Aorta (tissue), 5 donors: ENCODE measurements at regions of chr3 and their contacts with region 1.

Region 1: GRCh38 chr3:186493525-186494255 is 50.5 kb downstream of the CRYGS start:
- DNase-seq: no peak
- ATAC-seq: peak; percentile 62
- H3K4me3 ChIP-seq: no peak overlapping the region
- H3K27ac ChIP-seq: peak overlapping the region in 1 of 2 donors; percentile 19
- H3K4me1 ChIP-seq: peaks cover 0 to 4% of the 10 kb centered on the region in 2 donors
- H3K27me3 ChIP-seq: no peaks in the 10 kb centered on the region

Region 2: GRCh38 chr3:186406669-186407635 is 86.7 kb before region 1 on chr3:
- intact Hi-C with region 1: loop called in 1 of 2 experiments (anchors 5 kb)
- DNase-seq: peak; percentile 76 to 83
- ATAC-seq: peak; percentile 85
- H3K4me3 ChIP-seq: no peak overlapping the region
- H3K27ac ChIP-seq: peak overlapping the region; percentile 83 to 97
- H3K4me1 ChIP-seq: peaks cover 0 to 6% of the 10 kb centered on the region in 2 donors
- H3K27me3 ChIP-seq: no peaks in the 10 kb centered on the region

Region 3: DNA sequence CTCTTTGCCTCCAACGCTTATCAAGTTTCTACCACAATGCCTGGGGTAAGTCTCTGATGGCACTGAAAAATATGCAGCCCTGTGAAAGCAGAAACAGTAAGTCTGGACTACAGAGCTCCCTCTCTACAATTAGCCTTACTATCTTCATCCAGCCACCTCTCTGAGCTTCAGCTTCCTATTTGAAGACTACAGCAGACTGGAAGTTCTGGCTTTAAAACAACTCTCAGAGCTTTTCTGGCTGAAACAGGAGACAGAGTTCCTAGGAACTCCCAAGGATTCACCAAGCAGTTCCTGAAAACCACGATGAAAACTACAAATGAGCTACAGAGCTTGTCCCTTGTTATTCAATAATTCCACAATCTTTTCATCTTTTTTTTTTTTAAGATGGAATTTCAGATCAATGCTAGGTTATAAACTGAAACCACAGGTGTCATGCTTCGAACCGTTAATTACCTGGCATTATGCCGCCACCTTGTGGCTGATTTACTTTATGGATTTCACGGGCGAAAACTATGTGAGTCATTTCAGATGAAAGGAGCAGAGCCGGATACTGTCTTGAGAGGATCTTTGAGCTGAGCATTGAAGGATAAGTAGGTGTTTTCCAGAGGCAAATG is 46.6 kb after region 1 on chr3:
- intact Hi-C with region 1: no loop called
- DNase-seq: peak in 1 of 2 donors; percentile 72
- ATAC-seq: peak; percentile 83
- H3K4me3 ChIP-seq: no peak overlapping the region
- H3K27ac ChIP-seq: no peak overlapping the region
- H3K4me1 ChIP-seq: no peaks in the 10 kb centered on the region
- H3K27me3 ChIP-seq: no peaks in the 10 kb centered on the region